ENCODE measurements at regions of chr10 and their contacts with region 1.

Region 1: DNA sequence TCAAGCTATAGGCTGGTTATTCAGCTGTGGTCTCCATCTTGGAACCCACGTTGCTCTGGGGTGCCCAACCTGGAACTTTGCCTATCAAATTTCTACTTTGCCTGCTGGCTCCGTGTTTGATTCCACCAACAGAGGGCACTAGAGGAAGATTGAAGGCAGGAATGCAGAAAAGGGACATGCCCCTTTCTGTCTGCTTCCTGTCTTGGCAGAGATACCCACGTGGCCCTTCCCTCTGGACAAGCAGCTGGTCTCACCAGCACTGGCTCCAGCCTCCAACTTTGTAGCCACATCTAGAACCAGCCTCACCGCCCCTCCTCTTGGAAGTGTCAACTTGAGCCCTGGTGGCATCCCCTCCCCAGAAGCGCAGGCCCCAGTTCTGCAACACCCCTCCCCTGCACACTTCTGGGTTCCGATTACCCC is 52.1 kb upstream of the ZNF438 start:
- DNase-seq: peak; percentile 43
- CTCF ChIP-seq: peak; percentile 57

Region 2: DNA sequence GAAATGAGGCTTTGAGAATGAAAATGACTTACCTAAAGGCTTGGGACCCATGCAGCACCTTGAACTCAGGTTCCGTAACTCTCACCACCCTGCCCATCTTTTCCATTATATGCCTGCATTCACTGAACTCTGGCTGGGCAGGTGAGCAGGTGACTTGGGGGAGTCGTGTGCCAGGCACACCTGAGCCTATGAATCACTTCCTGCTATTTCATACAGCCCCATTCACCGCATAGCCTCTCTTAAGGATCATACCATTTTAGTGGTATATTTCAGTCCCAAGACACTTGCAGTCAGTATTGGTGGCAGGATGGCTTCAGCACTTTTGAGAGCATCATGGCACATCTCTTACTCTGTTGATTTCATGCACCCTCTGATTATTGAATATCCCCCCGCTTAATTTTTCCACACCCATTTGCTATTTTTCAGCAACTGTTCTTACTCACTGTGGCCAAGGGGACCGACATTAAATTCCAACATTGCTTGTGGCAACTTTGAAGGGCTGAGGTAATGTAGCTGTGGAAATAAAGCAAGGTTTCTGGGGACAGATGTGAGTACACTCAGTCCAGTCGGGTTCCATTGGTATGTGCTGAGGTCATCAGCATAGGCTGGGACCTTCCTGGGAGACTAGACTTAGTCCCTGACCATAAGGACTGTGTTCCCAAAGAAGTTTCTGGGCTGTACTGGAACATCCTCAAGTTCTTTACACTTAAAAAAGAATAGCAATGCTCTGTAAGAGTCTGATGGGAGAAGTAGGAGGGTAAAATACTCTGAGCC is 12.4 kb before region 1 on chr10:
- CTCF ChIA-PET with region 1: interaction called, 10 read pairs
- POLR2A ChIA-PET with region 1: no interaction called
- DNase-seq: no peak
- CTCF ChIP-seq: no peak

Region 3: DNA sequence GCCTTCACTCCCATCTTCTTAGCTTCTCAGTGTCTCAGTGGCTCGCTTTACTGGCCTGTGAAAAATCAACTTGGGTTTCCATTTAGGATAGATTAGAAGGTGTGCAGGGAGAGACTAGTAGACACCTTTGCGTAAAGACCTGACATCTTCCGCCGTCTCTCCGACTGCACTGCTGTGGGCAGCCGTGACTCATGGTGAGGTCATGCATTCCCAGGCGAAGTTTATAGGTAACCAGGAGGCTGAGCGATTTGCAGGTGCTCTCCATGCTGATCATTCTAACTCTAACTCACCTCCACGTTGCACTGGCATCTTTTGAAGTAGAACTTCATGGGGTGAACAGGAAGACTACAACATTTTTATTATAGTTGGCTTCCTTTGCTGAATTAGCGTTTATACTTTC is 15.9 kb after region 1 on chr10:
- CTCF ChIA-PET with region 1: interaction called, 16 read pairs
- POLR2A ChIA-PET with region 1: no interaction called
- DNase-seq: no peak
- CTCF ChIP-seq: no peak

Measured in GM10248 (cell line).